H1 (cell line): ENCODE measurements at regions of chr1 and their contacts with region 1.

Region 1: DNA sequence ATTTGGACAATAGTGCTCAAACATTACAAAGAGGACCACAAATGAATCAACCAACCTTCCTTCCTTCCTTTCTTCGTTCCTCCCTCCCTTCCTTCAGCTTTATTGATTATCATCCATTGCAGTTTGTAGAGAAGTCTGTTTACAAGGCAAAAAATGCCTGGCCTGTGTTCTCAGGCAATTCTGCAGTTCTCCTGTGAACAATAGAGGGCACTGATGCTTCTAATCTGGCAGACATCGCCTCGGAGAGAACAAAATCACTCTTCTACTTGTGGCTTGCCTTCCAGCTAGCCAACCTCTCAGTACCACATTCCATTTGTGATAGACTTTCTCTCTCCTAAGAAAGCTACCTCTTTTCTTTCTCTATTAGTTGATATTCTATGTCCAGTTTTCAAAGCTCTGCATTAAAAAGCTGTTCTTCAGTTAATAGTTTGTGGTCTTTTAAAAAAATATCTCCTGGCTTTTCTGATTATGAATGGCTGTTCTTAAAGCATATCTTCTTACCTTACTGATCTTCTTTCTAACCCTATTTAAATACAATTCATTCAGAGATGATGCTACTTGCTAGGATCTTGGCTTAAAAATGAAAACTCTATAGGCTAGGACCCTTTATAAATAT is 26.9 kb upstream of the ESRRG start:
- DNase-seq: peak in 1 of 2 experiments; percentile 27
- H3K4me3 ChIP-seq: no peak overlapping the region
- H3K27ac ChIP-seq: no peak overlapping the region
- H3K4me1 ChIP-seq: peaks cover 0 to 3% (median 0%) of the 10 kb centered on the region in 4 experiments; a peak in 1 of 7 replicates
- H3K27me3 ChIP-seq: no peaks in the 10 kb centered on the region
- CTCF ChIP-seq: peak; percentile 11 to 91 (median 75)
- EP300 ChIP-seq: no peak
- POLR2A ChIP-seq: no peak
- RAD21 ChIP-seq: peak; percentile 93 to 95

Region 2: DNA sequence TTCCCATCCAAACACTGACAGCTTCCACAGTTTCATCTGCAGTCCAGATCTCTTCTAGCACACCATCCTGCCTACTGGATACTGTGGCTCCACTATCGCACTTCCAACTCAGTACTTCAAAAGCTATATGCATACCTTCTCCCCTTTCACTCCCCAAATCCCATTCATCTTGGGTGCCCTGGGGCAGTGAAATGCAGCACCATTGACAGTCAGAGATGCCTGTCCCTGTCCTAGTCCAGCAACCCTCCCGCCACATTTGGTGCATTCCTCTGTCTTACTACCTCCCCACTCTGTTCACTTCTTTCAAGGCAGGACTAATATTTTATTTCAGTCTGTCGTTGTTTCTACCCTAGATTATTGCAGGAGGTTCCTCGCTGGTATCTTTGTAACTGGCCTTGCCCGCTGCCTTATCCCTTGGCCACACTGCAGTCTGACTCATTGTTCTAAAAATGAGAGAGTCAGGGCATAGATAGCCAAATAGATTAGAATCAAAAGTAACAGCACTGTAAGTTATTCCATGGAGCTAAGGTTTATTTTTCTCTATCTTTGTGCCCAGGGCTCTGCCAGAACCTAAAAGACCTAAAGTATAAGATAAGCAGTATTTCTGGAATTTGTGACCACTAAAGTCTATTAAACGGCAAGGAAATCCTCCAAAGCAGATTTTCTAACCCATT is 123.6 kb before region 1 on chr1:
- CTCF ChIA-PET with region 1: no interaction called
- POLR2A ChIA-PET with region 1: no interaction called
- DNase-seq: no peak
- H3K4me3 ChIP-seq: no peak overlapping the region
- H3K27ac ChIP-seq: no peak overlapping the region
- H3K4me1 ChIP-seq: no peaks in the 10 kb centered on the region
- H3K27me3 ChIP-seq: no peaks in the 10 kb centered on the region
- CTCF ChIP-seq: no peak
- EP300 ChIP-seq: no peak
- POLR2A ChIP-seq: no peak
- RAD21 ChIP-seq: no peak

Region 3: GRCh38 chr1:216665406-216665805 is 84.7 kb before region 1 on chr1:
- CTCF ChIA-PET with region 1: no interaction called
- POLR2A ChIA-PET with region 1: no interaction called
- DNase-seq: no peak
- H3K4me3 ChIP-seq: no peak overlapping the region
- H3K27ac ChIP-seq: no peak overlapping the region
- H3K4me1 ChIP-seq: no peaks in the 10 kb centered on the region
- H3K27me3 ChIP-seq: no peaks in the 10 kb centered on the region
- CTCF ChIP-seq: no peak
- EP300 ChIP-seq: no peak
- POLR2A ChIP-seq: no peak
- RAD21 ChIP-seq: no peak

Region 4: DNA sequence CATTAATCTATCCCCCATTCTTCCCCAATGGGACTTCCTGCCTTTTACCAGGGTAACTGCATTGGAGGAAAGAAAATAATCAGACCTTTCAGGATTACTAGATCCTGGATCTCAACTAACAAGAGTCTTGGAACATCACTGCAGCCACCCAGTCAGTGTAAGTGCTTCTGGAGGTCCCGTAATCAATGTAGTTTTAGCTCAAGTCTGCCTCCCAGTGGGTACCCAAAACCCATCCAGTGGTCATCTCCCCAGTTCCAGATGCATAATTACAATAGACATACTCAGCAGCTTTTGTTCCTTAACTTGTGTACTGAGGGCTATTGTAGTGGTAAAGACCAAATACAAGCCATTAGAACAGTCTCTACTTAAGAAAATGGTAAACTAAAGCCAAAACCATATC is 561.6 kb after region 1 on chr1:
- CTCF ChIA-PET with region 1: interaction called, 14 read pairs
- POLR2A ChIA-PET with region 1: no interaction called
- DNase-seq: peak in 1 of 2 experiments; percentile 5
- H3K4me3 ChIP-seq: no peak overlapping the region
- H3K27ac ChIP-seq: no peak overlapping the region
- H3K4me1 ChIP-seq: peaks cover 0 to 2% (median 0%) of the 10 kb centered on the region in 4 experiments; a peak in 1 of 7 replicates
- H3K27me3 ChIP-seq: no peaks in the 10 kb centered on the region
- CTCF ChIP-seq: peak; percentile 36 to 70 (median 64)
- EP300 ChIP-seq: no peak
- POLR2A ChIP-seq: no peak
- RAD21 ChIP-seq: peak; percentile 82 to 84